ENCODE measurements at regions of chr4 and their contacts with region 1.

Region 1: DNA sequence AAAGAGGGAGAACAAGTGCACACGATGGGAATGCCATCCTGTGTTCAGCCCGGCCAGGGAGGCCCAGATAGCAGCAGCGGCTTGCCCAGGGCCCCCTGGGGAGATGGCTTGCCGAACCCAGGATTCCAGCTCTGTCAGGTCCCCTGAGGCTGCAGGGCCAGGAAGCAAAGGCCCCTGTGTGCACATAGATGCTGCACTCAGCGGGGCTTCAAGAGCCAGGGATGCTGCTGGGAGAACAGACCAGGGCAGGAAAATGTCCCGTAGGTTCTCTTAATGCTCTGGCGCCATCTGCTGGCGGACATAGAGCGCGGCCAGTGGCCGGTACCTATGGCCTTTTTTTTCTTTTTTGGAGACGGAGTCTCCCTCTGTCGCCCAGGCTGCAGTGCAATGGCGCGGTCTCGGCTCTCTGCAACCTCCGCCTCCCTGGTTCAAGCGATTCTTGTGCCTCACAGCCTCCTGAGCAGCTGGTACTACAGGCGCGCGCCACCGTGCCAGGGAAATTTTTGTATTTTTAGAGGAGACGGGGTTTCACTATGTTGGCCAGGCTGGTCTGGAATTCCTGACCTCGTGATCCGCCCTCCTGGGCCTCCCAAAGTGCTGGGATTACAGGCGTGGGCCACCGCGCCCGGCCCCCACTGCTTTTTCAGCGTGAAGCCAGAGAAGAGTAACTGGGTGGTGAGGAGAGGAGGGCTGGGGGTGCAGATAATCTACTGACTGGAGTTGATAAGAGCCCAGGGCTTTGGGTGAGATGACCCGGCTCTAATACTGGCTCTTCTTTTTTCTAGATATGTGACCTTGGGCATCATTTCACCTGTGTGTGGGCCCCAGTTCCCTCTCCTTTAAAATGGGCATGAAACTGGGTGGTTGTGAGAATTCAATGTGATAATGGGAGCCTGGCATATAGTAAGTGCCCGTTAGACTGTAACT is 22.5 kb downstream of the MED28 start:
- DNase-seq: peak; percentile 83
- H3K4me3 ChIP-seq: no peak overlapping the region
- H3K27ac ChIP-seq: no peak overlapping the region
- H3K4me1 ChIP-seq: no peaks in the 10 kb centered on the region
- H3K27me3 ChIP-seq: no peaks in the 10 kb centered on the region
- CTCF ChIP-seq: peak; percentile 63 to 88 (median 74)
- POLR2A ChIP-seq: no peak

Region 2: GRCh38 chr4:17544831-17545234 is 92.1 kb before region 1 on chr4:
- intact Hi-C with region 1: loop called (anchors 5 kb)
- DNase-seq: no peak
- H3K4me3 ChIP-seq: no peak overlapping the region
- H3K27ac ChIP-seq: no peak overlapping the region
- H3K4me1 ChIP-seq: no peaks in the 10 kb centered on the region
- H3K27me3 ChIP-seq: no peaks in the 10 kb centered on the region
- CTCF ChIP-seq: no peak
- POLR2A ChIP-seq: no peak

Measured in testis (tissue), 5 donors.